ENCODE measurements at regions of chr12 and their contacts with region 1.

Region 1: GRCh38 chr12:14845350-14845750 is 2.0 kb upstream of the ART4 start:
- DNase-seq: peak; percentile 82
- H3K4me3 Mint-ChIP-seq: no peak overlapping the region
- H3K27ac Mint-ChIP-seq: no peak overlapping the region
- H3K4me1 Mint-ChIP-seq: peaks cover 5% of the 10 kb centered on the region
- H3K27me3 Mint-ChIP-seq: peaks cover 2% of the 10 kb centered on the region

Region 2: GRCh38 chr12:14723763-14724162 is 121.6 kb before region 1 on chr12:
- intact Hi-C with region 1: loop called (anchors 5 kb)
- DNase-seq: peak; percentile 87
- H3K4me3 Mint-ChIP-seq: no peak overlapping the region
- H3K27ac Mint-ChIP-seq: no peak overlapping the region
- H3K4me1 Mint-ChIP-seq: peaks cover 2% of the 10 kb centered on the region
- H3K27me3 Mint-ChIP-seq: peaks cover 21% of the 10 kb centered on the region

Region 3: GRCh38 chr12:14913381-14913781 is 68.0 kb after region 1 on chr12:
- intact Hi-C with region 1: loop called (anchors 5 kb)
- DNase-seq: no peak
- H3K4me3 Mint-ChIP-seq: no peak overlapping the region
- H3K27ac Mint-ChIP-seq: no peak overlapping the region
- H3K4me1 Mint-ChIP-seq: peaks cover 19% of the 10 kb centered on the region
- H3K27me3 Mint-ChIP-seq: no peaks in the 10 kb centered on the region

Region 4: GRCh38 chr12:14995583-14996425 is 150.5 kb after region 1 on chr12:
- intact Hi-C with region 1: loop called (anchors 1 kb)
- DNase-seq: peak; percentile 64
- H3K4me3 Mint-ChIP-seq: no peak overlapping the region
- H3K27ac Mint-ChIP-seq: no peak overlapping the region
- H3K4me1 Mint-ChIP-seq: peaks cover 20% of the 10 kb centered on the region
- H3K27me3 Mint-ChIP-seq: peaks cover 24% of the 10 kb centered on the region

Region 5: GRCh38 chr12:15220994-15221885 is 375.9 kb after region 1 on chr12 and contains the start of gene RERG:
- intact Hi-C with region 1: loop called (anchors 5 kb)
- DNase-seq: peak; percentile 94
- H3K4me3 Mint-ChIP-seq: peak within 1 kb of the TSS; percentile 69
- H3K27ac Mint-ChIP-seq: no peak within 1 kb of the TSS
- H3K4me1 Mint-ChIP-seq: peaks cover 7% of the 10 kb centered on the region
- H3K27me3 Mint-ChIP-seq: peaks cover 48% of the 10 kb centered on the region
- total RNA-seq, gene RERG: not detected in 2 replicates

Measured in activated CD4-positive, alpha-beta T cell treated with anti-CD3 and anti-CD28 coated beads, Interleukin-2, amount 10 ng/mL, durations not matched to agents 24 days and 14 days (primary cell).